Activated CD4-positive, alpha-beta memory T cell treated with anti-CD3 and anti-CD28 coated beads for 36 hours (primary cell): ENCODE measurements at regions of chr7 and their contacts with region 1.

Region 1: DNA sequence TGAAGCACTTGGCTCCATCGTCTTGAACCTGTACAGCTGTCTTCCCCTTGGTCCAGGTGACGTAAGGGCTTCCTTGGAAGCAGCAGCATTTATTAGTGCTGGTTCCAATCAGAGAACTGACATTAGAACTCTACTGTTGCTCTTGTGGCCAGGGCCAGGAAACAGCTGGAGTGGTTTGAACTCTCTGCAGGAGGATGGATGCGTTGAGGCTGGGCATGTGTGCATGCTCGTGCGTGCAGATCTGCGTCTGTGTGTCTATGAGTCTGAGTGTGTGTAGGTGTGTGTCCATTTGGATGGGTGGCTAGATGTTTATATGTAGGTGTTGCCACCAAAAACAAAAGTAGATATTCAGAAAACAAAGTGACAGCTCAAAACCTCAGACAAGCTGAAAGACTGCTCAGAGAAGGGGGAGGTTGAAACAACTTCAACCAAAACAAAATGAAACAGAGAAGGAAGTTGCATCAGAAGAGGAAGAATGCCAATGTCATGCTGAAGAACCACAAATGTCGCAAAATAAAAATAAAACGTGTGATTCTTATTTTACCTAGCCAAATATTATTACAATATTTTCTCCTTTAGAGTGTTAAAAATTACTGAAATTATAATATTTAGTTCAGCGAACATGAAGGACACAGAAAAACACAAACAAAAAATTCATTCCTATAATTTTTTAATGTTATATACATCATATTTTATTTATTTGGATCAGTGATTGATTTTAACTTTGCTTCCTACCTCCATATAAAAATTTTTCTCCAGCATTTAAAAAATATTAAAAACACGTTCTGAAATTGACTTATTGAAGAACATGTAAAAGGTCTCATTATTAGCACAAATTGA is 96.1 kb upstream of the MKLN1 start:
- DNase-seq: peak; percentile 81
- H3K4me3 Mint-ChIP-seq: peak overlapping the region; percentile 64
- H3K27ac Mint-ChIP-seq: peak overlapping the region; percentile 88
- H3K4me1 Mint-ChIP-seq: peaks cover 48% of the 10 kb centered on the region
- H3K27me3 Mint-ChIP-seq: no peaks in the 10 kb centered on the region

Region 2: DNA sequence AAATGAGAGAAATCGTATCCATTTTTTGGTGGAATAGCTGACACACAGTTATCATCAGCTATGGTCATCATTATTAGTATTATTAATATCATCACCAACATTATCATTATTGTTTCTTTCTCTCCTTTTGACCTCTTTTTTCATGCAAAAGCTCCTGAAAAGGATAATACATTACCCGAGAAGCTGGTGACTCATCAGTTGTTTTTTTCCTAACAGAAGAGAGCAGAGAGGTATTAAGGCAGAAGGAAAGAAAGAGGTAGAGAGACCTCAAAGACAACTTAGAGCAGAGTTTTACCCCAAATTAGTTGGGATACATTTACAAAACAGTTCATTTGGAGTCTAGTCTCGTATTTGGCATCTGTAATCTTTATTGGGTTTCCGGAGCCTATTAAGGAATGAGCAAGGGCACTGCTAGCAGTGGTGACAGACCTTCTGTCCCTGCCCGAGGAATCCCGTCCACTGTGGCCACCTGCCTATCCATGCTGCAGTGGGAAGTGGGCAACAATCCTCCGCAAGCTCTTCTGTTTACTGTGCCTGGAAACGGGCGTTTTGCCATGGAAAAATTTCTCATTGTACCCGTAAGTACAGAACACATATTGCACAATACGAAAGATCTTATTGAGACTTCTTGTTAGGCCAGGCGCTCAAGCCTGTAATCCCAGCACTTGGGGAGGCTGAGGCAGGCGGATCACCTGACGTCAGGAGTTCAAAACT is 73.9 kb before region 1 on chr7:
- CTCF ChIA-PET with region 1: no interaction called
- POLR2A ChIA-PET with region 1: no interaction called
- intact Hi-C with region 1: no loop called
- DNase-seq: no peak
- H3K4me3 Mint-ChIP-seq: no peak overlapping the region
- H3K27ac Mint-ChIP-seq: no peak overlapping the region
- H3K4me1 Mint-ChIP-seq: no peaks in the 10 kb centered on the region
- H3K27me3 Mint-ChIP-seq: no peaks in the 10 kb centered on the region

Region 3: GRCh38 chr7:131188367-131189339 is 42.9 kb before region 1 on chr7:
- CTCF ChIA-PET with region 1: interaction called, 5 read pairs
- POLR2A ChIA-PET with region 1: interaction called, 17 read pairs
- intact Hi-C with region 1: loop called (anchors 1 kb)
- DNase-seq: peak; percentile 68
- H3K4me3 Mint-ChIP-seq: peak overlapping the region; percentile 45
- H3K27ac Mint-ChIP-seq: peak overlapping the region; percentile 90
- H3K4me1 Mint-ChIP-seq: peaks cover 54% of the 10 kb centered on the region
- H3K27me3 Mint-ChIP-seq: no peaks in the 10 kb centered on the region

Region 4: DNA sequence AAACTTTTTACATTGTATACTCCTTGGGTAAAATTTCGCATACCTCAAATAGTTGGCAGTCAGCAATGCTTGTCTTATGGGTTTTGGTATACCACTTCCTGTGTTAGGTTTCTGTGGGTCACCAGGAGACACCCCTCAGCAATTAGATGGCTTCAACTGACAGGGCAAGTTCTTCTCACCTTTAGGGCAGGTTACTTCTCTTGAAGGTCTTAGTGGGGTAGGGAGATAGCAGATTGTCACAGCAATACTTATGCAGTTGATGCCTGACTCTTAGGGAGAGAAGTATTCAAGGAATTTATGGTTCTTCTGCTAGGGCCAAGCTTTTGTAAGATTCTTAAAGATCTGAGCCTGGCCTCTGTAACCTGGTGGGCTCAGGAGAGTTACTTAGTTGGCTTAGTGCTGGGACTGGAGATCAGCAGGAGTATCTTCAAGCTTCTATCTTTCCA is 138.9 kb after region 1 on chr7:
- CTCF ChIA-PET with region 1: no interaction called
- POLR2A ChIA-PET with region 1: no interaction called
- intact Hi-C with region 1: loop called (anchors 5 kb)
- DNase-seq: peak; percentile 40
- H3K4me3 Mint-ChIP-seq: no peak overlapping the region
- H3K27ac Mint-ChIP-seq: no peak overlapping the region
- H3K4me1 Mint-ChIP-seq: peaks cover 69% of the 10 kb centered on the region
- H3K27me3 Mint-ChIP-seq: no peaks in the 10 kb centered on the region

Region 5: GRCh38 chr7:131507592-131508331 is 276.2 kb after region 1 on chr7:
- CTCF ChIA-PET with region 1: no interaction called
- POLR2A ChIA-PET with region 1: no interaction called
- intact Hi-C with region 1: loop called (anchors 10 kb)
- DNase-seq: peak; percentile 88
- H3K4me3 Mint-ChIP-seq: peak overlapping the region; percentile 20
- H3K27ac Mint-ChIP-seq: no peak overlapping the region
- H3K4me1 Mint-ChIP-seq: peaks cover 18% of the 10 kb centered on the region
- H3K27me3 Mint-ChIP-seq: peaks cover 9% of the 10 kb centered on the region

Region 6: DNA sequence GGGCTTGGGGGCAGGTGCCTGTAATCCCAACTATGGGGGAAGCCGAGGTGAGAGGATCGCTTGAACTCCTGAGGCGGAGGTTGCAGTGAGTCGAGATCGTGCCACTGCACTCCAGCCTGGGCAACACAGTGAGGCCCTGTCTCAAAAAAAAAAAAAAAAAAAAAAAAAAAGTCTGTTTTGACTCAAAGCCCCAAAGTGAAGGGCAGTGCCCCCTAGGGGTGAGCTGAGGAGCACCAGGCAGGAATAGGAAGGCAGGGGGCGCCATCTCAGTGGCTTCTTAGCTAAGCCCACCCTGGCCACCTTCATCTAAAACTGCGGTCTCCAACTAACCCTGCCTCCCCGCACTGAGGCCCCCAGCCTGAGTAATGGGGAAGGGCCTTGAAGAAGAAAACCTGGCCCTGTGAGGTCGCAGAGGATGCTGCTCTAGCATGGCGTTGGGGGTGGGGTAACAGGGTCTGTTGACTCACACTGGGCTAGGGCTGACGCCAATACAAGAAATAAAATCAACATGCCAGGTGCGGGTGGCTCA is 315.0 kb after region 1 on chr7:
- CTCF ChIA-PET with region 1: no interaction called
- POLR2A ChIA-PET with region 1: no interaction called
- intact Hi-C with region 1: no loop called
- DNase-seq: peak; percentile 73
- H3K4me3 Mint-ChIP-seq: no peak overlapping the region
- H3K27ac Mint-ChIP-seq: no peak overlapping the region
- H3K4me1 Mint-ChIP-seq: no peaks in the 10 kb centered on the region
- H3K27me3 Mint-ChIP-seq: peaks cover 1% of the 10 kb centered on the region